Mammary epithelial cell (primary cell): ENCODE measurements at regions of chr22 and their contacts with region 1.

Region 1: GRCh38 chr22:36331306-36331911 is 56.4 kb downstream of the MYH9 start:
- DNase-seq: peak; percentile 97
- H3K4me3 ChIP-seq: no peak overlapping the region
- H3K27ac ChIP-seq: peak overlapping the region; percentile 99
- H3K4me1 ChIP-seq: peaks cover 98% of the 10 kb centered on the region
- H3K27me3 ChIP-seq: no peaks in the 10 kb centered on the region
- CTCF ChIP-seq: no peak

Region 2: DNA sequence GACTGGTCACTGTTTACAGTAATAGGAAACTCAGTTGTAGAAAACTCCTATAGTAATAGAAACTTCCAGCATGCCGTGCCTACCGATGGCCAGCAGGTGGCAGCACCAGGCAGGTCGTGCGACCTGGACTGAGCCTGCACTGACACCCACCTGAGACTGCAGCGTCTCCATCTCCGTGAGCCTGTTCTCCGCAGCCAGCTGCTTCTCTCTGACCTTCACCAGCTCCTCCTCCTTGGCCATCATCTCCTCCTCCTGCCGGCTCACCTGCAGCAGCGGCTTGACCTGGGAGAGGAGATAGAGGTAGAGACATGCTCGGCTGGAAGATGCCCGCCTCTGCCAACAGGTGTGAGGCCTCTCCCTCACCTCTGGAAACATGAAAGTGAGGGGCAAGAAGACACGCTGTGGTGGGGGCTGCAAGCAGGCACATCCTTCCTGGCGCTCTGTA is 30.0 kb before region 1 on chr22:
- CTCF ChIA-PET with region 1: no interaction called
- dilution Hi-C with region 1: no loop called
- in situ Hi-C with region 1: no loop called
- intact Hi-C with region 1: loop called (anchors 1 kb)
- DNase-seq: peak; percentile 56
- H3K4me3 ChIP-seq: no peak overlapping the region
- H3K27ac ChIP-seq: no peak overlapping the region
- H3K4me1 ChIP-seq: peaks cover 12% of the 10 kb centered on the region
- H3K27me3 ChIP-seq: no peaks in the 10 kb centered on the region
- CTCF ChIP-seq: peak; percentile 88 to 98

Region 3: GRCh38 chr22:36317658-36318271 is 13.6 kb before region 1 on chr22:
- CTCF ChIA-PET with region 1: no interaction called
- dilution Hi-C with region 1: no loop called
- in situ Hi-C with region 1: no loop called
- intact Hi-C with region 1: loop called (anchors 1 kb)
- DNase-seq: peak; percentile 46
- H3K4me3 ChIP-seq: no peak overlapping the region
- H3K27ac ChIP-seq: peak overlapping the region; percentile 15
- H3K4me1 ChIP-seq: peaks cover 12% of the 10 kb centered on the region
- H3K27me3 ChIP-seq: no peaks in the 10 kb centered on the region
- CTCF ChIP-seq: no peak

Region 4: GRCh38 chr22:36352803-36353507 is 21.5 kb after region 1 on chr22:
- CTCF ChIA-PET with region 1: no interaction called
- dilution Hi-C with region 1: no loop called
- in situ Hi-C with region 1: no loop called
- intact Hi-C with region 1: loop called (anchors 1 kb)
- DNase-seq: peak; percentile 71
- H3K4me3 ChIP-seq: no peak overlapping the region
- H3K27ac ChIP-seq: peak overlapping the region; percentile 75
- H3K4me1 ChIP-seq: peaks cover 79% of the 10 kb centered on the region
- H3K27me3 ChIP-seq: no peaks in the 10 kb centered on the region
- CTCF ChIP-seq: no peak

Region 5: DNA sequence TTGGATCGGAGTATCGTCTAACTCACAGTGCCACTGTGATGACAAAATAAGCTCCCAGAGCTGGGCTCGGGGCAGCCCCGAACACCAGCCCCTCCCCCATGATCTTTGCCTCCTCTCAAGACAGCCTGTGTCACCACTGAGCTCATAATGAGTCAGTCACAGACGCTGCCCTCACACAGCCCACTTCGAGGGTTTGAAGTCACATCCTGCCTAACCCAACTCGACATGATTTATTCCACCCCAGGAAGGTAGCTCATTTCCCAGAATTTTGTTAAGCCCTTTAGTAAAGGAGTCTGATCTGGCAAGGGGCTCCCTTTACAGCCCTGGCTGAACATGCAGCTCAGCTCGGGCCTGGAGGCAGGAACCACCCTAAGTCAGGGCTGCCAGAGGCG is 33.6 kb after region 1 on chr22:
- CTCF ChIA-PET with region 1: no interaction called
- dilution Hi-C with region 1: loop called (anchors 5 kb)
- in situ Hi-C with region 1: no loop called
- intact Hi-C with region 1: loop called (anchors 1 kb)
- DNase-seq: peak; percentile 97
- H3K4me3 ChIP-seq: no peak overlapping the region
- H3K27ac ChIP-seq: peak overlapping the region; percentile 76
- H3K4me1 ChIP-seq: peaks cover 95% of the 10 kb centered on the region
- H3K27me3 ChIP-seq: no peaks in the 10 kb centered on the region
- CTCF ChIP-seq: no peak

Region 6: GRCh38 chr22:36387752-36388518 is 56.5 kb after region 1 on chr22 and contains the start of gene MYH9:
- CTCF ChIA-PET with region 1: no interaction called
- dilution Hi-C with region 1: no loop called
- in situ Hi-C with region 1: no loop called
- intact Hi-C with region 1: loop called (anchors 1 kb)
- DNase-seq: peak; percentile 100
- H3K4me3 ChIP-seq: peak within 1 kb of the TSS; percentile 56 to 90 (median 77)
- H3K27ac ChIP-seq: peak within 1 kb of the TSS; percentile 92
- H3K4me1 ChIP-seq: peaks cover 22% of the 10 kb centered on the region
- H3K27me3 ChIP-seq: no peaks in the 10 kb centered on the region
- CTCF ChIP-seq: no peak
- total RNA-seq, gene MYH9: 1,183 to 1,246 TPM

Region 7: GRCh38 chr22:36528795-36529751 is 197.7 kb after region 1 on chr22 and contains the start of gene EIF3D:
- CTCF ChIA-PET with region 1: no interaction called
- dilution Hi-C with region 1: no loop called
- in situ Hi-C with region 1: no loop called
- intact Hi-C with region 1: loop called (anchors 5 kb)
- DNase-seq: peak; percentile 100
- H3K4me3 ChIP-seq: peak within 1 kb of the TSS; percentile 85 to 90 (median 86)
- H3K27ac ChIP-seq: peak within 1 kb of the TSS; percentile 97
- H3K4me1 ChIP-seq: peaks cover 19% of the 10 kb centered on the region
- H3K27me3 ChIP-seq: no peaks in the 10 kb centered on the region
- CTCF ChIP-seq: peak in 1 of 2 donors; percentile 0
- total RNA-seq, gene EIF3D: 210 to 354 TPM

Region 8: GRCh38 chr22:36552289-36552688 is 220.9 kb after region 1 on chr22:
- CTCF ChIA-PET with region 1: no interaction called
- dilution Hi-C with region 1: no loop called
- in situ Hi-C with region 1: no loop called
- intact Hi-C with region 1: no loop called
- DNase-seq: no peak
- H3K4me3 ChIP-seq: no peak overlapping the region
- H3K27ac ChIP-seq: no peak overlapping the region
- H3K4me1 ChIP-seq: peaks cover 3% of the 10 kb centered on the region
- H3K27me3 ChIP-seq: peaks cover 7% of the 10 kb centered on the region
- CTCF ChIP-seq: no peak

Region 9: GRCh38 chr22:36884349-36885117 is 553.1 kb after region 1 on chr22:
- CTCF ChIA-PET with region 1: no interaction called
- dilution Hi-C with region 1: no loop called
- in situ Hi-C with region 1: no loop called
- intact Hi-C with region 1: no loop called
- DNase-seq: no peak
- H3K4me3 ChIP-seq: no peak overlapping the region
- H3K27ac ChIP-seq: no peak overlapping the region
- H3K4me1 ChIP-seq: no peaks in the 10 kb centered on the region
- H3K27me3 ChIP-seq: no peaks in the 10 kb centered on the region
- CTCF ChIP-seq: no peak